ENCODE measurements at regions of chr1 and their contacts with region 1.

Region 1: DNA sequence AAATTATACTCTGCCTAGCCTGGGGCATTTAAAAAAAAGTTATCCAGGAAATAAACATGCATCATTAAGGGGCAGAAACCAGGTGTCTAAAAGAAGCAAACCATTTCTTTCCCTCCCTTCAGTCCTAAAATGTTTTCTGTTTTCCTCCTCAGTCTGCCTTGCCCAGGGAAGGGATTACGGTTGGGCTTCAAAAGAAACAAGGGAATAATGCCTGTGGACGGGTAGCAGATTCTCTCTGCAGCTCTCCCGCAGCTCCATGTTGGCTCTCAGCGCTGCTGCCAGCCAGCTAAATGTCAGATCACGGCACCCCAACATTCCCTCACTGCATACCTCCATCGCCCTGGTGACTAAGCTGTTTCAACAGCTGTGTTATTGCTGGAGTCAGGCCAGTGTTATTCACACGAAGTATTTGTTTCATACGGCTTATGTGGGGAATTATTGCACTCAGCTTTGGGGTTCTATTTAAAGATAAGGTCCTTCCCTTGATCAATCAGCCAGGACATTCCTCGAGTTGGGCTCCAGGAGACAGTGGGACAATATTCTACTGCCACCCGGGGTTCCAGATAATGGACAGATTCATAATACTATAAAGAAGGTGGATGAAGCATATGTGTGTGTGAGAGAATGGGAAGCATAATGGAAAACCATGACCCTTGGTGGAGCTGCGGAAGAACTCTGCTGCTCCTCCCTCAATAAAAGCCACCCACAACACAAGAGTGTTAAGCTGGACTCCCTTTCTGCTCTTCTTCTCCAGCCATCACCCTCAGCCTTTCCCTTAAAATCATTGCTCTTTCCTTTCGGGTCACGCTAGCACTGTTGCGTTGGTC is 58.2 kb downstream of the WLS start:
- DNase-seq: peak; percentile 98
- H3K4me3 ChIP-seq: peak overlapping the region in 1 of 3 experiments; percentile 41
- H3K27ac ChIP-seq: peak overlapping the region; percentile 93
- H3K4me1 ChIP-seq: peaks cover 66% of the 10 kb centered on the region
- H3K27me3 ChIP-seq: no peaks in the 10 kb centered on the region
- CTCF ChIP-seq: no peak
- POLR2A ChIP-seq: peak; percentile 60

Region 2: DNA sequence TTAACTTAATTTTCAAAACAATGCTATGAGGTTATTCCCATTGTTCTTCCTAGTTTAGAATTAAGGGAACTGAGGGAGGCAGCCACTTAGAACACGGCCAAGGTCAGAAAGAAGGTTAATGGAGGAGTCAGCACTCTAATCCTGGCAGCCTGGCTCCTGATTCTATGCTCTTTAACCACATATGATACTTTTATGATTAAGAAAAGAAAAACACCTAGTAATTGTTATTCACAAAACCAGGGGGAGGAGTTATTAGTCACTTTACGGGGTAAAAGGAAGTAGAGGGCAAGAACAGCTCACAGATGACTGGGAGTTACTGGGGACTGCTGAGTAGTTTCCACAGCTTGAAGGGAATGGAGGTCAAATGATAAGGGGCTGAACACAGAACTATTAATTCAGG is 450.5 kb before region 1 on chr1:
- CTCF ChIA-PET with region 1: no interaction called
- POLR2A ChIA-PET with region 1: no interaction called
- dilution Hi-C with region 1: no loop called
- intact Hi-C with region 1: loop called (anchors 10 kb)
- DNase-seq: peak; percentile 97
- H3K4me3 ChIP-seq: peak overlapping the region in 1 of 3 experiments; percentile 17
- H3K27ac ChIP-seq: peak overlapping the region; percentile 95
- H3K4me1 ChIP-seq: peaks cover 68% of the 10 kb centered on the region
- H3K27me3 ChIP-seq: no peaks in the 10 kb centered on the region
- CTCF ChIP-seq: no peak
- POLR2A ChIP-seq: peak; percentile 40

Region 3: DNA sequence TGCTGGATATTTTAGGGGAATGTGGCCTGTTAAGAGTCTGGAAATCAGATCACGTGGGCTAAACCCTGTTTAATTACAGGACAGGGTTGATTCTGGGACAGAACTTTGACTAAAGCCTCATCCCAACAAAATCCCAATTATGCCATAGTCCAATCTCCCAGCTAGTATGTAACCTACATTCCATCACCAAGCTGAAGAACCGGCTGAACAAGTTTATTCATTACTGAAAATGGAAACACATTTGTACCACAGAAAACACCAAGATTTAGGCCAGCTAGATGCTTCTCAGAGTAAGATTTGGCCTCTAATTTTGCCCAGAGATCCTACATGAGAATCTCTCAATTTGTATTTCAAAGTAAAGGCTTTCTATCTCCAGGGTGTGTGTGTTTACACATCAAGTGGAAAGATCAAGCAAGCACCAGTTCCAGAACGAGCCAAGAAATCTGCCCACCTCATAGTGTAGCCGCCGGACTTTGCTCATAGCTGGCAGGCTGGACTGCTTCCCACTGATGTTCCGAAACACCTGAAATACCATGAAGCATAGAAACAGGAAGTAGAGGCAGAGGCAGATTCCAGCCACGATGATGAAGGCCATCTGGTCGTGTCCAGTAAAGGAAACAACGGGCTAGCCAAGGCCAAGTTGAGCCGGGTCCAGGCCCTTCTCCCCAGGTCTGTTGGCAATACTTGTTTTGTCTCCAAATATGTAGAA is 28.6 kb before region 1 on chr1:
- CTCF ChIA-PET with region 1: no interaction called
- POLR2A ChIA-PET with region 1: no interaction called
- dilution Hi-C with region 1: no loop called
- intact Hi-C with region 1: no loop called
- DNase-seq: no peak
- H3K4me3 ChIP-seq: no peak overlapping the region
- H3K27ac ChIP-seq: no peak overlapping the region
- H3K4me1 ChIP-seq: no peaks in the 10 kb centered on the region
- H3K27me3 ChIP-seq: no peaks in the 10 kb centered on the region
- CTCF ChIP-seq: no peak
- POLR2A ChIP-seq: no peak

Region 4: GRCh38 chr1:68197891-68198290 is 23.8 kb after region 1 on chr1:
- CTCF ChIA-PET with region 1: interaction called, 11 read pairs
- POLR2A ChIA-PET with region 1: interaction called, 3 read pairs
- dilution Hi-C with region 1: no loop called
- intact Hi-C with region 1: loop called (anchors 1 kb)
- DNase-seq: peak; percentile 48
- H3K4me3 ChIP-seq: no peak overlapping the region
- H3K27ac ChIP-seq: no peak overlapping the region
- H3K4me1 ChIP-seq: peaks cover 23% of the 10 kb centered on the region
- H3K27me3 ChIP-seq: no peaks in the 10 kb centered on the region
- CTCF ChIP-seq: no peak
- POLR2A ChIP-seq: no peak

Region 5: GRCh38 chr1:68307378-68307787 is 133.3 kb after region 1 on chr1:
- CTCF ChIA-PET with region 1: no interaction called
- POLR2A ChIA-PET with region 1: no interaction called
- dilution Hi-C with region 1: no loop called
- intact Hi-C with region 1: no loop called
- DNase-seq: no peak
- H3K4me3 ChIP-seq: no peak overlapping the region
- H3K27ac ChIP-seq: no peak overlapping the region
- H3K4me1 ChIP-seq: no peaks in the 10 kb centered on the region
- H3K27me3 ChIP-seq: peaks cover 3 to 4% of the 10 kb centered on the region in 2 experiments
- CTCF ChIP-seq: no peak
- POLR2A ChIP-seq: no peak

Region 6: GRCh38 chr1:68321084-68321685 is 147.1 kb after region 1 on chr1:
- CTCF ChIA-PET with region 1: interaction called, 32 read pairs
- POLR2A ChIA-PET with region 1: no interaction called
- dilution Hi-C with region 1: no loop called
- intact Hi-C with region 1: no loop called
- DNase-seq: peak; percentile 70
- H3K4me3 ChIP-seq: no peak overlapping the region
- H3K27ac ChIP-seq: no peak overlapping the region
- H3K4me1 ChIP-seq: no peaks in the 10 kb centered on the region
- H3K27me3 ChIP-seq: no peaks in the 10 kb centered on the region
- CTCF ChIP-seq: peak; percentile 72 to 88
- POLR2A ChIP-seq: no peak

Region 7: DNA sequence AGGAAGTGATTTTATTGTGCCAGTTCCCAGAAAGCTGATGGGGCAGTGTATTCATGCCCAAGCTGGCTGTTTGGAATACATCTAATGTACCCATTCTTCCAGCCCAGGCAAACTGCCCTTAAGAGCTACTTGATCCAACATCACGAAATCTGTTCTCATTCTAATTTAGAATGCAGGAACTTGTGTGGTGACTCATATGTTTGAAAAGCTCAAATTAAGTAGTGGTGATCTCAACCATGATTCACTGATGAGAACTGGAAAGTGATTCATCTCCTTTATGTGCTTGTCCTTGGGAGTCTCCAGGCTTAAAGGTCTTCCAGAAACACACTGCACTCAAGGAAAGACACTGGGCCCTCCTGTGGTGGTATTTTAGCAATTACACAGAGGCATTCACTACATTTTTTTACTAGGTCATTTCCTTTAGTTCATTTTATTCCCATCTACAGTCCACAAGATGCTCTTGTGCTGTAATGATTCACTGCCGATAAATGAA is 210.2 kb after region 1 on chr1:
- CTCF ChIA-PET with region 1: interaction called, 3 read pairs
- POLR2A ChIA-PET with region 1: interaction called, 3 read pairs
- dilution Hi-C with region 1: no loop called
- intact Hi-C with region 1: loop called (anchors 1 kb)
- DNase-seq: peak; percentile 98
- H3K4me3 ChIP-seq: peak overlapping the region in 1 of 3 experiments; percentile 18
- H3K27ac ChIP-seq: peak overlapping the region; percentile 97
- H3K4me1 ChIP-seq: peaks cover 30% of the 10 kb centered on the region
- H3K27me3 ChIP-seq: no peaks in the 10 kb centered on the region
- CTCF ChIP-seq: peak; percentile 32 to 35
- POLR2A ChIP-seq: no peak